Right ventricle myocardium inferior (tissue), 1 donor: ENCODE measurements at regions of chr5 and their contacts with region 1.

Region 1: DNA sequence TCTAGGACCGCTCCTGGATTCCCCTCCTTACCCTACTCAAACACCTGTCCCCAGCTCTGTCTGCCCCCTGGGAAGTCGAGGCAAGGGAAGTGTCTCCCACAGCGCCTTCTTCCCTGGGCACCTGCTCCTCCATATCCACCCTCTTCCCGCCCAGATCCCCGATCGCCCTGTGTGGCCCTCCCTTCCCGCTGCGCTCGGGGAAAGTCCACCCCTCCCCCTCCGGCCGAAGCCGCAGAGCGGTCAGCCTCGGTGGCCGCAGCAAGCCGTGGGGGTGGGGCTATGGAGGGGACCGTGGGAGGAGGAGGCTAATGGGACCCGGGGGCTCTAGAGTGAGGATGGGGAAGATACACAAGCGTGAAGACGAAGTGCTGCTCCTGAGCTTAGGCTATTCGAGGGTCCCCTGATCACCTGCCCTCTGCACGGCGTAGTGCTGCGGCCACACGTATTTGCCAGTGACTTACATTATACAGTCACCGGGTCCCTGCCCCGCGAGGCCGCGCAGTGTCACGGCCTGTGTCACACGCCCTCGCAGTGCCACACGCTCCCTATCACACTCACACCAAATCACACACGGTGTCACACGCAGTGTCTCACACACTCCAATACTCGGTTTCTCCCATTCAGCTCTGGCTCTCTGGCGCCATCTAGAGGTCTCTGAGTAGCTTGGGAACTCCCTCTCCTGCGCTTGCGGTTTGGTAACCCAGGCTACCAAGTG is 658 bp upstream of the PCDH1 start:
- DNase-seq: peak; percentile 90
- ATAC-seq: peak; percentile 90

Region 2: GRCh38 chr5:141701360-141702119 is 177.3 kb before region 1 on chr5:
- intact Hi-C with region 1: loop called (anchors 1 kb)
- DNase-seq: no peak
- ATAC-seq: no peak

Region 3: GRCh38 chr5:141778206-141778605 is 100.7 kb before region 1 on chr5:
- intact Hi-C with region 1: no loop called
- DNase-seq: no peak
- ATAC-seq: no peak

Region 4: GRCh38 chr5:141805874-141806595 is 72.8 kb before region 1 on chr5:
- intact Hi-C with region 1: loop called (anchors 5 kb)
- DNase-seq: no peak
- ATAC-seq: peak; percentile 74

Region 5: GRCh38 chr5:141849375-141850243 is 29.3 kb before region 1 on chr5:
- intact Hi-C with region 1: loop called (anchors 2 kb)
- DNase-seq: peak; percentile 89
- ATAC-seq: peak; percentile 92